CD14-positive monocyte (primary cell): ENCODE measurements at regions of chr1 and their contacts with region 1.

Region 1: GRCh38 chr1:25997828-25998761 is at the start of gene PAFAH2:
- DNase-seq: peak; percentile 99 to 100 (median 99)
- H3K4me3 ChIP-seq: peak within 1 kb of the TSS; percentile 71 to 85 (median 83)
- H3K4me3 Mint-ChIP-seq: peak within 1 kb of the TSS; percentile 83 to 96
- H3K27ac ChIP-seq: peak within 1 kb of the TSS; percentile 97 to 98
- H3K27ac Mint-ChIP-seq: peak within 1 kb of the TSS; percentile 99 to 100 (median 100)
- H3K4me1 ChIP-seq: peaks cover 25 to 30% of the 10 kb centered on the region in 2 donors
- H3K4me1 Mint-ChIP-seq: peaks cover 28% of the 10 kb centered on the region
- H3K27me3 ChIP-seq: no peaks in the 10 kb centered on the region
- H3K27me3 Mint-ChIP-seq: peaks cover 0 to 5% (median 0%) of the 10 kb centered on the region in 3 donors
- CTCF ChIP-seq: peak; percentile 90
- polyA plus RNA-seq, gene PAFAH2: 6.4 to 9.2 (median 6.8) TPM

Region 2: DNA sequence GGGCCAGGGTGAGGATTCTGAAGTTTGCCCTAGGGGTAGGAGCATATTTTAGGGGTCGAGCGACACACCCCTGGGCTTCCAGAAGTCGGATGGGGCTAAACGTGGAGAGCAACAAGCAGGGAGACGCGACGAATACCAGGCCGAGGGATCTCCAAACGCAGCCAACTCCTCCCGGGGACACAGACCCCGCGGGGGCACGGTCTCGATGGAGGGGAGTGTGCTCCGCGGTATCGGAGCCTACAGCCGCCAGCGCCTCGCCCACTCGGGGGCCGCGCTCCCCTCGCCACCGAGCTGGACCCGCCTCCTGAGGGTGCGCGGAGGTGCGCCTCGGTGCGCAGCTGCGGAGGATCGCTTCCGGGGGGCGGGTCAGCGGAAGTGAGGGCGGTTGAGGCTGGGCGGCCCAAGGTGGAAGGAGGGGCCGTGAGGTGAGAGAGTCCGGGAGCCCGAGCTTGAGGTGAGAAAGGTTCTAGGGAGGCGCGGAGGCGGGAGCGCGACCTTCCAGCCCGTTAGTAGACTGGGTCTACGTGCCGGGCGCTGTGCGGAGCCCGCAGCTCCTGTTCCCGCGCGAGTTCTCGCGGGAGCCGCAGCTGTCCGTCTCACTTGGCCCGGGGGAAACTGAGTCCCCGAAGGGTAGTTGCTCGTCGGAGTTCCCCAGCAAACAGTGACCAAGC is 178.4 kb before region 1 on chr1 and contains the start of gene MTFR1L:
- intact Hi-C with region 1: loop called in 1 of 2 experiments (anchors 2 kb)
- DNase-seq: peak; percentile 51 to 75 (median 58)
- H3K4me3 ChIP-seq: peak within 1 kb of the TSS; percentile 70 to 93 (median 88)
- H3K4me3 Mint-ChIP-seq: peak within 1 kb of the TSS; percentile 97 to 98
- H3K27ac ChIP-seq: peak within 1 kb of the TSS; percentile 82 to 87
- H3K27ac Mint-ChIP-seq: peak within 1 kb of the TSS; percentile 91 to 98 (median 95)
- H3K4me1 ChIP-seq: peaks cover 20 to 33% of the 10 kb centered on the region in 2 donors
- H3K4me1 Mint-ChIP-seq: peaks cover 36% of the 10 kb centered on the region
- H3K27me3 ChIP-seq: no peaks in the 10 kb centered on the region
- H3K27me3 Mint-ChIP-seq: peaks cover 0 to 4% (median 3%) of the 10 kb centered on the region in 3 donors
- CTCF ChIP-seq: no peak
- polyA plus RNA-seq, gene MTFR1L: 67.3 to 73.5 (median 69.9) TPM

Region 3: DNA sequence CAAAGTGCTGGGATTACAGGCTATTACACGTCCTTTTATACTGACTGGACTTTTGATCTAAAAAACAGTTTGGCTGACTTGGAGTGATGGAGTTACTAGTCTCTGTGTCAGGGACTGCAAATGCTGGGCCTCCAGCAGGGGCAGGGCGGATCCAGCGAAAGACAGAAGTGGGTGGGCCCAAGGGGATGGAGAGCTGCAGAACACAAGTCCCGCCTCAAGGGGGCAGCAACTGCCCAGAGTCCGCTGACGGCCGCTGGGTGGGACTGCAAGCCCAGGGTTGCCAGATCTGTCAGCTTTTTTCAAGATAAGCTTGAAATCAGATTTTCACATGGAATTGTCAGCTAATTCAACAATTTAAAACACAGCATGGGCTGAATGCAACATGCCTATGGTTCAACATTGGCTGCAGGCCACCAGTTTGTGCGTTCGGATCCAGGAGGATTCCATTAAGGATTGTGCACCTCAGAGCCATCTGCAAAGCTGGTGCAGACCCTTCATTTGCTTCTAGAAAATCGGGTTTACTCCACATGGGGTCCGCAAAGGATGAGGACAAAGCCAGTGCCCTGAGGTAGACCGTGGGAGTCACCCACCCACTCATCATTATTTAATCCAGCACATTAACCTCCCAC is 102.6 kb before region 1 on chr1:
- intact Hi-C with region 1: loop called (anchors 1 to 2 kb)
- DNase-seq: peak; percentile 85 to 89 (median 86)
- H3K4me3 ChIP-seq: no peak overlapping the region
- H3K4me3 Mint-ChIP-seq: no peak overlapping the region
- H3K27ac ChIP-seq: peak overlapping the region in 1 of 2 donors; percentile 34
- H3K27ac Mint-ChIP-seq: peak overlapping the region in 3 of 7 donors; percentile 41 to 66 (median 63)
- H3K4me1 ChIP-seq: peaks cover 15 to 19% of the 10 kb centered on the region in 2 donors
- H3K4me1 Mint-ChIP-seq: peaks cover 20% of the 10 kb centered on the region
- H3K27me3 ChIP-seq: no peaks in the 10 kb centered on the region
- H3K27me3 Mint-ChIP-seq: no peaks in the 10 kb centered on the region
- CTCF ChIP-seq: peak; percentile 97